RWPE1 (cell line): ENCODE measurements at regions of chr1 and their contacts with region 1.

Region 1: DNA sequence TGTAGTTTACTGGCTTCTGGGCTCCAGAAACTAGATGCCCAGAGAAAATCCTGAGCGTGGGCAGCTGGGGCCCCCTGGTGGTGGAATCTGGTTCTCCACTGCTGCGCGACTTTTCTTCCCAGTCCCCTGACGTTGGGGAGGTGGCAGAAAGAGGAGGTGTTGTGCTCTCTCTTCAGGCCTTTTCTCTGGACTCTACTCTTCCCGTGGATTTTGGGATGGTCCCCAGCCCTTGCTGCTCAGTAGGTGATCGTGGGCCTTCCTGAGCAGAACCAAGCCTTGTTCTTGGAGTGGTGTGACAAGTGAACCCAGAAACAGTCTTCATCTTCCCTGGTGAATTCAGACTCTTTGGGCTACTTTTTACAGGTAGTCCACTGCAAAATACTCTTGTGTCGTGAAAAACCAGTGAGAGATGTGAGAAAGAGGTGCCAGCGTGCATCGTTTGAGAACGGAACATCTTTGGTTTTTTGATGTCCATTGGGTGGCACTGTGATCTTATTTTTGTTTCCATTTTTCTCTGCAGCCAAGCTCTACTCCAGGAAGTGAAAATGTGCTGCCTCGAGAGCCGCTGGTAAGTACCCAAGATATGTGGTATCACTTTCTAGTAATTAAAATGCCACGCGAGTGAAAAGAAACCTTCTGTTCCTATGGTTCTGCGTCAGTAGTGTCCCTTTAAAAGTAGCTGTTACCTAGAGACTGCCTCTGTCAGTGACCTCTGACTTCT is 20.2 kb downstream of the PEX14 start:
- DNase-seq: peak; percentile 80
- H3K27ac ChIP-seq: peak overlapping the region; percentile 95
- CTCF ChIP-seq: peak; percentile 97

Region 2: DNA sequence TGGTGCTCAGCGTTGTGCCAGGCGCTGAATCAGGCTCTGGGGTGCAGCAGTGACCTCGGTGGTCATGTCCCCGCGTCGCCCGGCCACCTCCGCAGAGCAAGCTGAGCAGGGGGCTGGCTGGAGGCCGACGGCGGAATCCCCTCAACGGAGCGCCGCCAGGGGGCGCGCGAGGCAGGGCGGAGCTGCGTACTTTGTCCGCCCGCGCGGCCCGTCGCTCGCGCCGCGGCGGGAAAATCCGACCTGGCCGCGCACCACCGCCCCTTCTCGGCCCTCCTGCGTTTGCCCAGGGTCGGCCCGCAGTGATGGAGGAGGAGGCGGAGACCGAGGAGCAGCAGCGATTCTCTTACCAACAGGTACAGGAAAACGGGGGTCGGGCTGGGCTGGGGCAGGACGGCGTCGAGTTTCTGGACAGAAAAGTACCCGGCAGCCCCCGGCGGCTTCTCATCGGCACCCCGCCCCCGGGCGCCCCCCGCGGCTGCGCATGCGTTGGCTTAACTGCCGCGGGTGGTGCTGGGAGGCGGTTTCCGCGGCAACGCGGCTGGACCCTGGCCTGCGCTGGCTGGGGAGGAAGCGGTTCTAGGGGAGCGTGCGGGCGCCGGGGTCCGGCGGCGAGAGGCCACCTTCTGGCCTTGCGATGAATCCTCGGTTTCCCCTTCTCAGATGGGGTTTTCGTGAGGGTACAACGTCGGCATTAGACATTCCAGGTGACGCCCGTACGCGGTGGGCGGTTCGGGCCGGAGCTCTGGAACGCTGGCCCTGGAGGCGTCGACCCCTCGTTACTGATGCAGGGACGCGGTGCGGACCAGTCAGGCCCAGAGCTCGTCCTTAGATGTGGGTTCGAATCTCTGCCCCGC is 64.5 kb before region 1 on chr1 and contains the start of gene CENPS:
- CTCF ChIA-PET with region 1: interaction called, 44 read pairs
- POLR2A ChIA-PET with region 1: no interaction called
- DNase-seq: peak; percentile 97
- H3K27ac ChIP-seq: peak within 1 kb of the TSS; percentile 84
- CTCF ChIP-seq: peak; percentile 92

Region 3: DNA sequence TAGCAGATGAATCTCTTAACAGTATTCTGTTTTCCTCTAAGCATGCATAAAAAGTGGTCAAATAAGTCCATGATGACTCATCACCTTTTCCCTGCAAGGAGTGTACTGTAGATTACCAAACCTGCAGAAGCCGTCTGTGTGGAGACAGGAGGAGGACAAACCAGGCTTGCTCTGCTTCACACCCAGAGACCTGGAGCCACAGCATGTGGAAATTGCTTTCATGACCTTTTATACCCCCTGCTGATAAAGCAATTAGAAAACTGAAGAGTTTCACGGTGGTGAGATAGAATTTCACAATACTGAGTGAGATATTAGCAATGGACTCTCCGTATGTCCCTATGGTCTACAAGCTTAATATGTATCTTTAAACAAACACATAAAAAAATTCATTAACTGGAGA is 35.7 kb before region 1 on chr1:
- CTCF ChIA-PET with region 1: interaction called, 10 read pairs
- POLR2A ChIA-PET with region 1: no interaction called
- DNase-seq: peak; percentile 75
- H3K27ac ChIP-seq: peak overlapping the region; percentile 84
- CTCF ChIP-seq: no peak

Region 4: GRCh38 chr1:10484521-10484920 is 10.4 kb before region 1 on chr1:
- CTCF ChIA-PET with region 1: interaction called, 13 read pairs
- POLR2A ChIA-PET with region 1: no interaction called
- DNase-seq: no peak
- H3K27ac ChIP-seq: no peak overlapping the region
- CTCF ChIP-seq: no peak

Region 5: GRCh38 chr1:10507111-10507879 is 12.4 kb after region 1 on chr1:
- CTCF ChIA-PET with region 1: interaction called, 22 read pairs
- POLR2A ChIA-PET with region 1: no interaction called
- DNase-seq: peak; percentile 74
- H3K27ac ChIP-seq: peak overlapping the region; percentile 37; the same call in 1 of the 2 replicates
- CTCF ChIP-seq: peak; percentile 87